Transverse colon (tissue), 4 donors: ENCODE measurements at regions of chr7 and their contacts with region 1.

Region 1: GRCh38 chr7:15643000-15643705 is 43.3 kb downstream of the MEOX2 start:
- DNase-seq: no peak
- H3K4me3 ChIP-seq: no peak overlapping the region
- H3K27ac ChIP-seq: no peak overlapping the region
- H3K4me1 ChIP-seq: no peaks in the 10 kb centered on the region
- H3K27me3 ChIP-seq: no peaks in the 10 kb centered on the region
- CTCF ChIP-seq: no peak
- EP300 ChIP-seq: no peak
- POLR2A ChIP-seq: no peak

Region 2: GRCh38 chr7:15358112-15358511 is 285.0 kb before region 1 on chr7:
- in situ Hi-C with region 1: no loop called
- intact Hi-C with region 1: loop called (anchors 5 kb)
- DNase-seq: no peak
- H3K4me3 ChIP-seq: no peak overlapping the region
- H3K27ac ChIP-seq: no peak overlapping the region
- H3K4me1 ChIP-seq: no peaks in the 10 kb centered on the region
- H3K27me3 ChIP-seq: no peaks in the 10 kb centered on the region
- CTCF ChIP-seq: no peak
- EP300 ChIP-seq: no peak
- POLR2A ChIP-seq: no peak